Activated CD4-positive, alpha-beta T cell treated with anti-CD3 and anti-CD28 coated beads, Interleukin-2, amount 10 ng/mL, durations not matched to agents 24 days and 14 days (primary cell): ENCODE measurements at regions of chr7 and their contacts with region 1.

Region 1: GRCh38 chr7:154927624-154928143 is 75.2 kb downstream of the PAXIP1 start:
- DNase-seq: peak; percentile 92
- H3K4me3 Mint-ChIP-seq: peak overlapping the region; percentile 96
- H3K27ac Mint-ChIP-seq: peak overlapping the region; percentile 96
- H3K4me1 Mint-ChIP-seq: peaks cover 20% of the 10 kb centered on the region
- H3K27me3 Mint-ChIP-seq: peaks cover 25% of the 10 kb centered on the region

Region 2: GRCh38 chr7:154953006-154953684 is 25.5 kb after region 1 on chr7:
- intact Hi-C with region 1: loop called (anchors 1 kb)
- DNase-seq: peak; percentile 85
- H3K4me3 Mint-ChIP-seq: no peak overlapping the region
- H3K27ac Mint-ChIP-seq: no peak overlapping the region
- H3K4me1 Mint-ChIP-seq: peaks cover 3% of the 10 kb centered on the region
- H3K27me3 Mint-ChIP-seq: no peaks in the 10 kb centered on the region

Region 3: GRCh38 chr7:155069992-155070751 is 142.5 kb after region 1 on chr7 and contains the start of gene HTR5A:
- intact Hi-C with region 1: loop called (anchors 1 kb)
- DNase-seq: peak; percentile 96
- H3K4me3 Mint-ChIP-seq: no peak within 1 kb of the TSS
- H3K27ac Mint-ChIP-seq: no peak within 1 kb of the TSS
- H3K4me1 Mint-ChIP-seq: no peaks in the 10 kb centered on the region
- H3K27me3 Mint-ChIP-seq: peaks cover 20% of the 10 kb centered on the region
- total RNA-seq, gene HTR5A: not detected in 2 replicates

Region 4: DNA sequence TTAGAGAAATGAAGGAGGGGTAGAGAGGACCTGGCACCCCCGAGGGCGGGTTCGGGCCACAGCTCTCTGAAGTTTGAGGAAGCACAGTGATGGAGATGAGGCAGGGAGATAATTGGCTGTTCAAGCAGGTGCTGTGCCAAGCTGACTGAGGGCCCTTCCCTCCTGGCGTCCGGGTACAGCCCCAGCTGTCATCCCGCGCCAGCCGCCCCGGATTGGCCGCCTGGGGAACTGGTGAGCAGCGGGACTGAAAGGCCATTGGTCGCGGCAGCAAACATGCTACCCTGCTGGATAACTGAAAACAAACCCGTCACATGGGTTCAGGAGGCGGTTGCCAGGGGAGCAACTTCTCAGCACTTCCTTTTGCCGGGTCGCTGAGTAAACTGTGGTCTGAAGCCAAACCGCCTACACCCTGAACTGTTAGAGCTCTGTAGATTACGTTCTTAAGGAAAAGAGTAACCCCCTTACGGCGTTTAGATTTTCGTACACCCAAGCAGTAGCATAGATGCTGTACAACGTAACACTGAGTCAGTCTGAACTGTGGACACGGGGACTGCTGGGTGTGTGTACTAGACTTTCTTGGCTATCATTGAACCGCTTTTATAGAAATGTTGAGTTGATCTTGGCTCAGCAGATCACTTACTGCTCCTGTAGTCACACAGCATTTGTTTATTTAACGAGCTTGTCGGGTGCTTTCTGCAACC is 371.3 kb after region 1 on chr7:
- intact Hi-C with region 1: loop called (anchors 1 kb)
- DNase-seq: peak; percentile 99
- H3K4me3 Mint-ChIP-seq: peak overlapping the region; percentile 94
- H3K27ac Mint-ChIP-seq: peak overlapping the region; percentile 97
- H3K4me1 Mint-ChIP-seq: peaks cover 42% of the 10 kb centered on the region
- H3K27me3 Mint-ChIP-seq: no peaks in the 10 kb centered on the region

Region 5: DNA sequence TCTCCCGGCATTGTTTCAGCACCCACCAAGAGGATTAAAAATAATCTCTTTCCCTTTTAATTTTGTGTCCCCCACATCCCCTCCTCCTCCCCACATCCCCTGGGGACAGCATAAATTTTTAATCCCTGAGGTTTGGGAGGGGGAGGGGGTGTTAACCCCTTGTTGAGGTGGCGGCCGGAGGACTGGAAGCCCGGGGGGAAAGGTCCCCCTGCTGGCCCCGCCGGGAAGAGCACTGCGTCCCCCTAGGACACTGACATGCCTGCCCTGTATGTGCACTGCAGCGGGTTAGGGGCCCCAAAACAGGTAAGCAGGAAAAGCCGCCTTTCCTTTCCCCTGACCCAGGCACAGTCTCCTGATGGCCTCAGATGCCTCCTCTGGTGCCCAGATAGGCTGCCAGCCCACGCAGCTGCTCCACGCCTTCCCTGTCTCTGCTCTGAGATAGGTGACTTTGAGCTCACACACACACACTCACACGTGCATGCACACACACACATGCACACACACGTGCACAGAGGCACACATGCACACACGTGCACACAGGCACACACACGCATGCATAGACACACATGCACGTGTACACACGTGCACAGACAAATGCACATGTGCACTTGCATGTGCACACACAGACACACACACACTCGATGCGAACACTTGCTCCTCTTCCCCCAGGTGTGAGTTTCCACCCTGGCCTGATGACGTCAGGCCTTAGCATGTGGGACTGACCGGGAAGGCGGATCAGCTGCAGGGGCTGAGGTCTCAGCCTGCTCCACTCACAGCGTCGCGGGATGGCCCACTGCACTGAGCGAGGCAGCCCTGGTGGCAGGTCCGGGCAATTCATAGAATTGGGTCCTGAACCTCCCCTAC is 606.4 kb after region 1 on chr7:
- intact Hi-C with region 1: loop called (anchors 10 kb)
- DNase-seq: peak; percentile 72
- H3K4me3 Mint-ChIP-seq: no peak overlapping the region
- H3K27ac Mint-ChIP-seq: no peak overlapping the region
- H3K4me1 Mint-ChIP-seq: peaks cover 7% of the 10 kb centered on the region
- H3K27me3 Mint-ChIP-seq: peaks cover 69% of the 10 kb centered on the region